ENCODE measurements at regions of chr11 and their contacts with region 1.

Region 1: GRCh38 chr11:129930296-129930695 is 34.9 kb upstream of the NFRKB start:
- DNase-seq: no peak
- ATAC-seq: no peak
- H3K4me3 ChIP-seq: no peak overlapping the region
- H3K27ac ChIP-seq: no peak overlapping the region
- H3K4me1 ChIP-seq: no peaks in the 10 kb centered on the region
- CTCF ChIP-seq: no peak
- EP300 ChIP-seq: no peak
- POLR2A ChIP-seq: no peak
- RAD21 ChIP-seq: no peak

Region 2: GRCh38 chr11:129895126-129896041 is 34.9 kb before region 1 on chr11 and contains the start of gene NFRKB:
- CTCF ChIA-PET with region 1: no interaction called
- POLR2A ChIA-PET with region 1: no interaction called
- DNase-seq: peak; percentile 58 to 76
- ATAC-seq: peak; percentile 95 to 99
- H3K4me3 ChIP-seq: peak within 1 kb of the TSS; percentile 73
- H3K27ac ChIP-seq: peak within 1 kb of the TSS; percentile 83 to 100
- H3K4me1 ChIP-seq: peaks cover 11% of the 10 kb centered on the region; the same call in 1 of the 3 replicates
- CTCF ChIP-seq: no peak
- EP300 ChIP-seq: no peak
- POLR2A ChIP-seq: peak; percentile 70
- RAD21 ChIP-seq: no peak
- polyA plus RNA-seq, gene NFRKB: 10.2 and 11.8 TPM in 2 replicates

Region 3: GRCh38 chr11:129979046-129979605 is 48.8 kb after region 1 on chr11:
- CTCF ChIA-PET with region 1: no interaction called
- POLR2A ChIA-PET with region 1: no interaction called
- DNase-seq: no peak
- ATAC-seq: no peak
- H3K4me3 ChIP-seq: no peak overlapping the region
- H3K27ac ChIP-seq: no peak overlapping the region
- H3K4me1 ChIP-seq: no peaks in the 10 kb centered on the region
- CTCF ChIP-seq: no peak
- EP300 ChIP-seq: no peak
- POLR2A ChIP-seq: no peak
- RAD21 ChIP-seq: no peak

Region 4: GRCh38 chr11:130131961-130132850 is 201.9 kb after region 1 on chr11:
- CTCF ChIA-PET with region 1: interaction called, 109 read pairs
- POLR2A ChIA-PET with region 1: no interaction called
- DNase-seq: peak; percentile 61 to 71
- ATAC-seq: peak; percentile 73 to 87; a peak in 4 of 6 replicates
- H3K4me3 ChIP-seq: no peak overlapping the region
- H3K27ac ChIP-seq: no peak overlapping the region
- H3K4me1 ChIP-seq: no peaks in the 10 kb centered on the region
- CTCF ChIP-seq: peak; percentile 66
- EP300 ChIP-seq: no peak
- POLR2A ChIP-seq: no peak
- RAD21 ChIP-seq: peak; percentile 82 to 84